Tibial artery (tissue), 4 donors: ENCODE measurements at regions of chr14 and their contacts with region 1.

Region 1: DNA sequence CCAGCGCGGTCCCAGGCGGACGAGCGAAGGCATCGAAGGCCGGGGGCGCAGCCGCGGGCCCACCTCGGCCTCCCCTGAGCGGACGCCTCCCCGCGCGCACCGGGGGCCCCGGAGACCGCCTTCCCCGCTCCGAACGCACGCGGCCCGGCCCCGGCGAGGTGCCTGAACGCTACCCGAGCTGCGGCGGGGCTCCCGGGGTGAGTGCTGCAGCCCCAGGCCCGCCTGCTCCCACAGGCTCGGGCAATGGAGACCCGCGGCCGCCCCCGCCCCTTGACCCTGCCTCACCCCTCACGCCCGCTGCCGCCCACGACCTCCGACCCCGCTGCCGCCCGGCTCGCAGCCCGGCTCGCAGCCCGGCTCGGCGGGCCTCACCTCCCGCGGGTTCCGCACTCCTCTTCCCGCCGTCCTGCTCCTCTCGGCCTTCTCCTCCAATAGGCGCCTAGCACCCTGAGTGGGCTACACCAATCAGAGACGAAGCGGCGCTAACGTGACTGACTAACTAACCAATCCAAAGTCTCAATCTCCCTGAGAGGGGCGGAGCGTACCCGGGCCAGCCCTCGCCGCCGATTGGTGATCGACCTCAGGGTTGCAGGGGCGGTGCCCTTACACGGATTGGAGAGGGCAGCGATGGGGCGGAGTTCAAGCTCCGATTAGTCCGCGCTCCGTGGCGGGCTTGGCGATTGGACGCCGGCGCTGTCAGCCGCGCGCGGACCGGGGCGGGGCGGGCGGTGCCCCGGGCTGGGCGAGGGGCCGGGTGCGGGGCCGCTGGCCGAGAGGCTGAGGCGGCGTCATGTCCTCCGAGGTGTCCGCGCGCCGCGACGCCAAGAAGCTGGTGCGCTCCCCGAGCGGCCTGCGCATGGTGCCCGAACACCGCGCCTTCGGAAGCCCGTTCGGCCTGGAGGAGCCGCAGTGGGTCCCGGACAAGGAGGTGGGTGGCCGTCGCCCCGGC is at the starts of genes XRCC3 and ZFYVE21:
- DNase-seq: peak; percentile 100
- H3K4me3 ChIP-seq: peak within 1 kb of the TSS; percentile 76 to 94
- H3K27ac ChIP-seq: peak within 1 kb of the TSS; percentile 80 to 93
- H3K4me1 ChIP-seq: peaks cover 0 to 73% (median 62%) of the 10 kb centered on the region in 4 donors
- H3K27me3 ChIP-seq: no peaks in the 10 kb centered on the region
- CTCF ChIP-seq: peak in 1 of 2 experiments; percentile 10

Region 2: GRCh38 chr14:103518422-103519042 is 196.8 kb before region 1 on chr14:
- intact Hi-C with region 1: no loop called
- DNase-seq: peak in 1 of 2 donors; percentile 86
- H3K4me3 ChIP-seq: no peak overlapping the region
- H3K27ac ChIP-seq: peak overlapping the region; percentile 84 to 90
- H3K4me1 ChIP-seq: peaks cover 0 to 63% (median 54%) of the 10 kb centered on the region in 4 donors
- H3K27me3 ChIP-seq: no peaks in the 10 kb centered on the region
- CTCF ChIP-seq: peak; percentile 94 to 96

Region 3: GRCh38 chr14:103628684-103629502 is 86.4 kb before region 1 on chr14 and contains the start of gene KLC1:
- intact Hi-C with region 1: loop called (anchors 5 kb)
- DNase-seq: peak; percentile 77 to 92
- H3K4me3 ChIP-seq: peak within 1 kb of the TSS; percentile 80 to 96
- H3K27ac ChIP-seq: peak within 1 kb of the TSS; percentile 96 to 99
- H3K4me1 ChIP-seq: peaks cover 4 to 72% (median 60%) of the 10 kb centered on the region in 4 donors
- H3K27me3 ChIP-seq: no peaks in the 10 kb centered on the region
- CTCF ChIP-seq: no peak